HEK293 (cell line): ENCODE measurements at regions of chr1 and their contacts with region 1.

Region 1: DNA sequence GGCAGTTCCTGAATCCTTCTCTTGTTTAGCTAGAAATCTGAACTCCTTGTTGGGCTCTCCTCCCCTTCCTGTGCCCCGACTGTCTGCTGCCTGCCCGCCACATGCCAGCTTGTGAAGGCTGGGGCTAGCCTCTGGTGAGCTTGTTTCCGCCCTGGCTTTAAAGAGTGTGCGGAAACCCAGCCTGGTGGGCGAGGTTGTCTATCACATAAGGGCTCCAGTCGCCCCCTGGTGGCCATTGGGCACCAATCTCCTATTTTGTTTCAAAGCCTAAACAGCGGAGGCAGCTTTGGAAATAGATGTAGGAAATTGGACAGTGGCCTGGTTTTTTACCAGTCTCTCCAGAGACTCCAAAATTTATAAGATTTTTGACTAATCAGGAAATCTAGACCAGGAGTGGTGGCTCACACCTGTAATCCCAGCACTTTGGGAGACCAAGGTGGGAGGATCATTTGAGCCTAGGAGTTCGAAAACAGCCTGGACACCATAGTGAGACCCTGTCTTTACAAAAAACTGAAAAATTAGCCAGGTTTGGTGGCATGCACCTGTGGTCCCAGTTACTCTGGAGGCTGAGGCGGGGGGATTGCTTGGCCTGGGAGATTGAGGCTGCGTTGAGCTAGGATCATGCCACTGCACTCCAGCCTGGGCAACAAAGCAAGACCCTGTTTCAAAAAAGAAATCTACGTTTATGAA is 9.8 kb downstream of the ATP8B2 start:
- H3K4me3 ChIP-seq: no peak overlapping the region
- H3K27ac ChIP-seq: no peak overlapping the region
- H3K4me1 ChIP-seq: no peaks in the 10 kb centered on the region
- CTCF ChIP-seq: peak; percentile 44; the same call in 1 of the 2 replicates

Region 2: GRCh38 chr1:154198756-154199562 is 136.2 kb before region 1 on chr1:
- CTCF ChIA-PET with region 1: interaction called, 20 read pairs
- POLR2A ChIA-PET with region 1: interaction called, 5 read pairs
- H3K4me3 ChIP-seq: no peak overlapping the region
- H3K27ac ChIP-seq: no peak overlapping the region
- H3K4me1 ChIP-seq: peaks cover 6% of the 10 kb centered on the region
- CTCF ChIP-seq: no peak

Region 3: GRCh38 chr1:154288661-154289060 is 46.5 kb before region 1 on chr1:
- CTCF ChIA-PET with region 1: interaction called, 14 read pairs
- POLR2A ChIA-PET with region 1: no interaction called
- H3K4me3 ChIP-seq: no peak overlapping the region
- H3K27ac ChIP-seq: no peak overlapping the region
- H3K4me1 ChIP-seq: no peaks in the 10 kb centered on the region
- CTCF ChIP-seq: no peak

Region 4: DNA sequence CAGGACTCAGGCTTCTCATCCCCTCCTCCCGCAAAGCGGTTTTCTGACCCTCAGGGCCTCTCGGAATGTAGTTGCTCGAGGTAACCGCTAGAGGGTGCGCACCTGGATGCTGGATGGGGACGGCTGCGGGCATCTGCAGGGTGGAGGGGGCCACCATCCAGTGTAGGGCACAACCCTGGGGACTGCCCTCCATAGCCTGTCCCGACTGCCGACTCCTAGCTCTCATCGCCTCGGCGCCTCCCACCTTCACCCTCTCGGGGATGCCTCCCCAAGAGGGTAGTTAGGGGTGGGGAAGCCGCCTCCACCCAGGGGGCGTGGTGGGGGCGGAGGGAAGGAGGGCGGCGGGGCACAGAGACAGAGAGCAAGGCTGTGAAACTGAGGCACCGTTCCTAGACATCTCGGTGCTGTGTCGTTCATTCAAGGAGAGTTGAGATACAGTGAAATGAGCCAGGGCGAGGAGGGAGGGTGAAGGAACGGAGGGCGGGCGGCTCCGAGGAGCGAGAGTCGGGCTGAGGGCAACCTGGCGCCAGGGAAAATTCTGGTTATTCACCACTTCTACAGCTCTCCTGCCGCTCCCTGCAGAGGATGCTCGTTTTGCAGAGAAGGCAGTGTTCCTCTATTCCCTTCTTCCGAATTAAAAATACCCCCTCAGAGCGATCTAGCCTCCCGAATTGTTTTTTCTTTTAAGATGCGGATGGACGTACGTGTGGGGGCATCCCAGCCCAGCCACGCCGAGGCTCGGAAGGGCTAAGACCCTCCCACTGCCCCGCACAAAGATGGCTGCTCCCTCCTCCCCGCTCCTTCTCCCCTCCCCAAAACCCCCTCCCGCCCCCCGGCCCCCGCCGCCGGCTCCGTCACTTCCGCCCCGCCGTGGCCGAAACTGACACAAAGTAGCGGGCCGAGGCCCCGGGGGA is 10.2 kb before region 1 on chr1 and contains the start of gene ATP8B2:
- CTCF ChIA-PET with region 1: interaction called, 68 read pairs
- POLR2A ChIA-PET with region 1: no interaction called
- H3K4me3 ChIP-seq: peak within 1 kb of the TSS; percentile 49
- H3K27ac ChIP-seq: peak within 1 kb of the TSS; percentile 25; the same call in 1 of the 2 replicates
- H3K4me1 ChIP-seq: peaks cover 12% of the 10 kb centered on the region
- CTCF ChIP-seq: peak; percentile 96

Region 5: DNA sequence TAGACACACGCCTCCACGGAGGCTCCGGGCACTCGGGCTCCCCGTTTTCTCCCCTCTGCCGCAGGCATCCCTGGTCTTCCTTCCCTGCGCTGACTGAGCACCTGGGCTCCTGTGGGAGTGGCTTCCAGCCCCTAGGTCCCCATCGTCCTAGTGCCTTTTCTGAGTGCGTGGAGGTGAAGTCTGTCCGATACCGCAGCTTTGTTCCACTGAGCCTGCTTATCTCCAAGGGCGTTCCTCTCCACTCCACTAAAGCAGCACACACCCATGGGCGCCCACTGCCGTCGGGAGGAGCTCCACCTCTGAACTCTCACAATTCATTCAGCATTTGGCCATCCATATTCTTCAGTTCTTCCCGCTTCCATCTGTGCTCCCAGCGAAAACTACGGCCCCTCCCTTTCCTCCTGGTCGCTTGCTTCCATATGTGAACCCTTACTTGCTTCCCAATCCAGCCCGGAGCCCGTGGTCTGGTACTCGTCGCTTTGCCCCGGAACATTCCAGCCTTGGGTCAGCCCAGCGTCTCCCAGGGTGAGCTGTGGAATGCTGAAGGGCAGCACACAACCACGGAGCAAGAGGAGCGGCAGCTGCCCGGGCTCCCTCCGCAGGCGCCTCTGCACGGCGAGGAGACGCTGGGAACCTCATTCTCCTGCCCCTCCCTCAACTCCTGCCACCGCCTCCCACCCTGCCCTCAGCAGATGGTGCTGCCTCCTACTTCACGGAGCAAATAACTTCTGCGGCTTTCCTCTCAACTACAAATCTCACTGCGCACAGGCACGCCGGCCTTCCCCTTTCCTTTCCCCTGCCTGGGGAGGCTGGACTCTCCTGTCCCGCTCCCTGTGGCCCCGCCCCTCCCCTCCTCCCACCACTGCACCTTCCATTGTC is 17.6 kb after region 1 on chr1:
- CTCF ChIA-PET with region 1: interaction called, 33 read pairs
- POLR2A ChIA-PET with region 1: interaction called, 5 read pairs
- H3K4me3 ChIP-seq: peak overlapping the region; percentile 41
- H3K27ac ChIP-seq: no peak overlapping the region; the same call in 1 of the 2 replicates
- H3K4me1 ChIP-seq: 0 out of 2 replicates have a peak, but pooled peaks cover 3% of the 10 kb centered on the region
- CTCF ChIP-seq: no peak; the same call in none of the 2 replicates

Region 6: DNA sequence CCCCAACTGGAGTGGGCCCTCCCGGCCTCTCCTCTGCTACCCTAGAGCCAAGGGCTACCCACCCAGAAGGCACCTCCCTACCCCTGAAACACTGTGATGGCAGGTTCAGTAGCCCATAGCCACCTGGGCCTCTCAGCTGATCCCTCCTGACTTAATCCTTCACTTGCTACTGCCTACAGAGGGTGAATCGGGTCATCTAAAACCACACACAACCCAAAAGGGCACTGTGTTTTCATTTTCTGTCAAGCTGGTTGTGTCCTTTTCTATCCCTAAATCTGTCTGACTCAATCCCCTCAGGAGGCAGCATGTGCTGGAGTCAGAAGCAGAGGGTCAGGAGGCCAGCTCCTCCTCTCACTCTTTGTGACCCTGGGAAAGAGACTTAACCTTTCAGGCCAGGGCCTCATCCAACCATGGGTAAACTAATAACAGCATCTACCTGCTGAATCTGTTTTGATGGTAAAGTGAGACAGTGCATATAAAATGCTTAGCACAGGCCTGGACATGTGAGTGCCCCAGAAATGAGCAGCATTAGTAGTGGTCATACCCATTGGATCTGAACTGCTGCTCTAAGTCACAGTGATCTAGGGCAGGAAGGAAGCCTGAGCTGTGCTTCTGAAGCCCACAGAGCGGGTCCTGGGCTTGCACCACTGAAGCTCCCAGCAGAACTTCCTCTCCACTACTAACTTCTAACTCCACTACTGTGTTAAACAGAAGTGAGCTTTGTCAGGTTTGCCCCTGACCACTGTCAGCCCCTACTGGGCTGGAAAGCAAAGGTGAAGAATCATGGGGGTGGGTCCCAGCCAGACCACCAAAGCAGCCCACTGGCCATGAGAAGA is 590.4 kb after region 1 on chr1:
- CTCF ChIA-PET with region 1: no interaction called
- POLR2A ChIA-PET with region 1: no interaction called
- H3K4me3 ChIP-seq: no peak overlapping the region
- H3K27ac ChIP-seq: no peak overlapping the region
- H3K4me1 ChIP-seq: no peaks in the 10 kb centered on the region
- CTCF ChIP-seq: no peak